Activated T-helper 1 cell treated with anti-CD3 and anti-CD28 coated beads, Interleukin-12 subunit alpha, Interleukin-12 subunit beta, Interleukin-2, Interleukin-4 antibody, amounts not matched to agents 30 ng/mL and 10 ng/mL and 1 ng/mL, durations not matched to agents 14 hours and 24 hours and 36 hours (primary cell): ENCODE measurements at regions of chr3 and their contacts with region 1.

Region 1: DNA sequence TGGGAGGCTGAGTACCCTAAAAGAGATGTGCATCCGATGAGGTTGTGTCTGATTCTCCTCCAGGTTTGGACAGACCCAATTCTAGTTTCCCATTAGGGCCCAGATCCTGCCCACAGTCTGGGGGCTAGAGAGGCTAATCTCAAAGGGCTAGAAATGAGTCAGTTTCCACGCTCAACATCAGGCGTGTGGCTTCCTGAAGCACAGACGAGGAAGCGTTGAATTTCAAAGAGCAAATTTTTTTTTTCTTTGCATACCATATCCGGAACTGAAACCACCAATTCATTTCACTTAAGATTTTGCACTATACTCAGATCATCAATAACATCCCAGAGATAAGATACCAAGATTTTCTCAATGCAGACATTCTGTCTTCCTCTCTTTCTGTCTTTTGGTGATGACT is 173.8 kb upstream of the BCL6 start:
- DNase-seq: peak; percentile 67
- H3K4me3 Mint-ChIP-seq: peak overlapping the region; percentile 62
- H3K27ac Mint-ChIP-seq: peak overlapping the region; percentile 93
- H3K4me1 Mint-ChIP-seq: peaks cover 86% of the 10 kb centered on the region
- H3K27me3 Mint-ChIP-seq: peaks cover 3% of the 10 kb centered on the region

Region 2: GRCh38 chr3:187738331-187739093 is 180.5 kb before region 1 on chr3:
- intact Hi-C with region 1: loop called (anchors 1 kb)
- DNase-seq: peak; percentile 67
- H3K4me3 Mint-ChIP-seq: peak overlapping the region; percentile 96
- H3K27ac Mint-ChIP-seq: peak overlapping the region; percentile 92
- H3K4me1 Mint-ChIP-seq: peaks cover 71% of the 10 kb centered on the region
- H3K27me3 Mint-ChIP-seq: no peaks in the 10 kb centered on the region

Region 3: GRCh38 chr3:187929112-187929816 is 10.2 kb after region 1 on chr3:
- intact Hi-C with region 1: loop called (anchors 1 kb)
- DNase-seq: no peak
- H3K4me3 Mint-ChIP-seq: peak overlapping the region; percentile 11
- H3K27ac Mint-ChIP-seq: peak overlapping the region; percentile 88
- H3K4me1 Mint-ChIP-seq: peaks cover 45% of the 10 kb centered on the region
- H3K27me3 Mint-ChIP-seq: no peaks in the 10 kb centered on the region

Region 4: DNA sequence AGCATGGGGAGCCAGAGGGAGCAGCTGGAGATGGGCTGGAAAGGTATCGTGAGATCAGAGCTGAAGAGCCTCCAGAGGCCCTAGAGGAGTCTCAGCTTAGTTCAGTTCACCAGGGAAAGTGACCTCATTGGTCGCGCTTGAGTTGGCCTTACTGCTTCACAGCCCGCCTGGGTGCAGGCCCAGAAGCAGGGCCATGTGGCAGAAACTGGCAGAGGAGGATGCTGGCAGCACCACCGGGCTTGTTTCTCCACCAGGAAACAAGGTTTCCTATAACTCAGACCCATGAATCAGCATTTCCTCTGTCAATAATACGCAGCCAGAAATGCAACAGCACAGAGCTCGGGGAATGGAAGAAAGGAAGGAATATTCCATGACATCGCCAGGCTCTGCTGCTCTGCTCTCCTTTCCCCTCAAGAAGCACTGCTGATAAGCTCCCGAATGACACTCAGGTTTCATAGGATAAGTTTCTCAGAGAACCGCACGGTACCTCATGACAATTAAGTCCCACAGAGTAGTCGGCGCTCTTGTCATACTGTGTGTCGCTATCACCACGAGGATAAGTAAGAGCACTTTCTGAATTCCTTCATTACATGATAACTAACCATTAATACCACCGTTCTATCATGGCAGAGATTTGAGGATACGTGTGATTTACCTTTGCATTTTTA is 87.8 kb after region 1 on chr3:
- intact Hi-C with region 1: no loop called
- DNase-seq: no peak
- H3K4me3 Mint-ChIP-seq: no peak overlapping the region
- H3K27ac Mint-ChIP-seq: peak overlapping the region; percentile 42
- H3K4me1 Mint-ChIP-seq: peaks cover 55% of the 10 kb centered on the region
- H3K27me3 Mint-ChIP-seq: peaks cover 2% of the 10 kb centered on the region

Region 5: DNA sequence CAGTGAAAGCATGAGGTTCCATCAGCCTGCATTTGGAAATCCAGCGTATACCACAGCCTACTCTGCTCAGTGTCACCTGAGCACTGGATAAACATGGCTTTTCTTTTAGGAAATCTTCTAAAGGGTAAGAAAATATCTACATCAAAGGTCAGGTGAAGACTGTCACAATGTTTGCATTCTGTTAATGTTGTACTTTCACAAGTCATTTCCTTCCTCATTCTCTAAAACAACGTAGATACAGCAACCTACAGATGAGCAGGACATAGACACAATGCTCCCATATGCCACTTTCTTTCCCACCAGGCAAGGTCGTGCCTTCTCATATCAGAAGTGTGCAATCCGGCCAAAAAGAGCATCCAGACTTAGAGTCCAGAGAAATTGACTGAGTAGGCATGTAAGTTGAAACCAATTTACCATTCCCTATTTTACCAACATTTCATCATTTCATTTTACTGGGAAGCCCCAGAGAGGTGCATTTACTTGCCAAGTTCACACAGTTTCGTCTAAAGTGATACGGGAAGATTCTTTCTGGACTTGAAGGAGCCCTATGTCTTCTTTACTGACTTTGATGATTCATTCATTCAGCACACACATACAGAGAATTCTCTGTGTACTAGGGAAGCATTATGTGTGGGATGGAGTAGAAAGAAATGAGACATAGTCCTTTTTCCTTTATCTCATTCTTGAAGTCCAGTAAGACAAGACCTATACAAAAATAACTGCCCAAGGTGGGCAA is 204.3 kb after region 1 on chr3:
- intact Hi-C with region 1: loop called (anchors 1 kb)
- DNase-seq: no peak
- H3K4me3 Mint-ChIP-seq: no peak overlapping the region
- H3K27ac Mint-ChIP-seq: peak overlapping the region; percentile 7
- H3K4me1 Mint-ChIP-seq: peaks cover 17% of the 10 kb centered on the region
- H3K27me3 Mint-ChIP-seq: peaks cover 1% of the 10 kb centered on the region

Region 6: GRCh38 chr3:188320757-188321156 is 401.7 kb after region 1 on chr3:
- intact Hi-C with region 1: loop called (anchors 1 kb)
- DNase-seq: no peak
- H3K4me3 Mint-ChIP-seq: no peak overlapping the region
- H3K27ac Mint-ChIP-seq: no peak overlapping the region
- H3K4me1 Mint-ChIP-seq: peaks cover 49% of the 10 kb centered on the region
- H3K27me3 Mint-ChIP-seq: peaks cover 1% of the 10 kb centered on the region

Region 7: GRCh38 chr3:188697127-188697526 is 778.1 kb after region 1 on chr3:
- intact Hi-C with region 1: loop called (anchors 2 kb)
- DNase-seq: no peak
- H3K4me3 Mint-ChIP-seq: no peak overlapping the region
- H3K27ac Mint-ChIP-seq: peak overlapping the region; percentile 18
- H3K4me1 Mint-ChIP-seq: peaks cover 36% of the 10 kb centered on the region
- H3K27me3 Mint-ChIP-seq: peaks cover 5% of the 10 kb centered on the region

Region 8: GRCh38 chr3:189041482-189042090 is 1122.5 kb after region 1 on chr3:
- intact Hi-C with region 1: loop called (anchors 1 kb)
- DNase-seq: peak; percentile 75
- H3K4me3 Mint-ChIP-seq: no peak overlapping the region
- H3K27ac Mint-ChIP-seq: no peak overlapping the region
- H3K4me1 Mint-ChIP-seq: peaks cover 56% of the 10 kb centered on the region
- H3K27me3 Mint-ChIP-seq: peaks cover 4% of the 10 kb centered on the region